AG04449 (cell line): ENCODE measurements at regions of chr7 and their contacts with region 1.

Region 1: GRCh38 chr7:149147072-149147751 is at the start of gene ZNF398:
- DNase-seq: no peak
- H3K4me3 ChIP-seq: peak within 1 kb of the TSS; percentile 80
- CTCF ChIP-seq: peak; percentile 47

Region 2: DNA sequence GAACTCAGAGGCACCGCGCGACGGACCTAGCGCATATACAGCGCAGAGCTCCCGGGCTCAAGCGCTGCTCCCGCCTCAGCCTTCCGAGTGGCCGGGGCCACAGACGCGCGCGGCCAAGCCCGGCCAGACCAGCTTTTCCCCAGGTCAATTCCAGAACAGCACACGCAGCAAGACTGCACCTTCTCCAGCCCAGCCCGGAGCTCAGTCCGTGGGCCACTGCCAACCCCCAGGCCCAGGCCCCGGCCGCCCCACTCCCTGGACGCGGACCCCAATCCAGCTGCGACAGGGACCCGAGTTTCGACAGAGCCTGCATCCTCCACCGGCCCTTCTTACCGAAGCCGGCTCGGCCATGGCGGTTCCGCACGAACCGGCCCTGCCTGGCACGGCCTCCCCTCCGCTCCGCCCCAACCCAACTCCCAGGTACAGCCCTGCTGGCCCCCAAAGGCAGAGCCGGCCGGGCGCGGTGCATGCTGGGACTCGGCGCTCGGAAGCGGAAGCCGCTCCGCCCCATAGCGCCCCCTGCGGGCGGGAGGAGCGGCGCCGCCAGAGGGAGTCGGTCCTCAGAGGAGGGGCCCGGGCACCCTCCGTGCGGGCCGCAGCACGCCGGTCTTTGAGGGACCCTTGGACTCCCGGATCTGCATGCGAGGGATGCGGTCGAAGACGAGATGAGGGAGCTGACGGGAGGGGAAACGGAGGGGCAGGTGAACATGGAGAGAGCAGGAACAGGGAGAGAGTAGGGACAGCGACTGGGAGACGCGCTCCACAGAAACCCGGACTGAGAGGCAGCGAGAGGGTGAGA is 21.1 kb before region 1 on chr7 and contains the start of gene ZNF425:
- CTCF ChIA-PET with region 1: interaction called, 42 read pairs
- POLR2A ChIA-PET with region 1: interaction called, 26 read pairs
- DNase-seq: peak; percentile 24
- H3K4me3 ChIP-seq: peak within 1 kb of the TSS; percentile 96
- CTCF ChIP-seq: peak; percentile 97

Region 3: GRCh38 chr7:149133028-149133705 is 14.0 kb before region 1 on chr7:
- CTCF ChIA-PET with region 1: interaction called, 42 read pairs
- POLR2A ChIA-PET with region 1: interaction called, 4 read pairs
- DNase-seq: no peak
- H3K4me3 ChIP-seq: no peak overlapping the region
- CTCF ChIP-seq: no peak

Region 4: GRCh38 chr7:149161241-149161848 is 14.1 kb after region 1 on chr7:
- CTCF ChIA-PET with region 1: interaction called, 31 read pairs
- POLR2A ChIA-PET with region 1: no interaction called
- DNase-seq: no peak
- H3K4me3 ChIP-seq: no peak overlapping the region
- CTCF ChIP-seq: no peak

Region 5: GRCh38 chr7:149195180-149196150 is 48.3 kb after region 1 on chr7 and contains the start of gene ZNF282:
- CTCF ChIA-PET with region 1: interaction called, 16 read pairs
- POLR2A ChIA-PET with region 1: interaction called, 8 read pairs
- DNase-seq: peak; percentile 46
- H3K4me3 ChIP-seq: peak within 1 kb of the TSS; percentile 85
- CTCF ChIP-seq: peak; percentile 85

Region 6: GRCh38 chr7:149209518-149210269 is 62.5 kb after region 1 on chr7:
- CTCF ChIA-PET with region 1: no interaction called
- POLR2A ChIA-PET with region 1: no interaction called
- DNase-seq: no peak
- H3K4me3 ChIP-seq: no peak overlapping the region
- CTCF ChIP-seq: peak; percentile 60